Heart left ventricle (tissue), 16 donors: ENCODE measurements at regions of chr2 and their contacts with region 1.

Region 1: GRCh38 chr2:70767699-70768589 is at the start of gene ADD2:
- DNase-seq: peak in 4 of 5 donors; percentile 29 to 45 (median 37)
- ATAC-seq: peak; percentile 67 to 87 (median 78)
- H3K4me3 ChIP-seq: peak within 1 kb of the TSS; percentile 4 to 65 (median 56)
- H3K27ac ChIP-seq: peak within 1 kb of the TSS in 3 of 12 donors; percentile 3 to 44 (median 17)
- H3K4me1 ChIP-seq: peaks cover 6 to 20% (median 14%) of the 10 kb centered on the region in 12 donors
- H3K27me3 ChIP-seq: peaks cover 5 to 63% (median 32%) of the 10 kb centered on the region in 9 donors
- CTCF ChIP-seq: peak in 9 of 12 donors; percentile 13 to 52 (median 42)
- POLR2A ChIP-seq: no peak
- total RNA-seq, gene ADD2: 0.49 to 7.3 (median 3.7) TPM

Region 2: GRCh38 chr2:70647873-70648481 is 120.0 kb before region 1 on chr2:
- intact Hi-C with region 1: loop called in 1 of 10 experiments (anchors 5 kb)
- DNase-seq: peak in 3 of 5 donors; percentile 31 to 48 (median 47)
- ATAC-seq: peak in 3 of 4 donors; percentile 61 to 67 (median 62)
- H3K4me3 ChIP-seq: no peak overlapping the region
- H3K27ac ChIP-seq: no peak overlapping the region
- H3K4me1 ChIP-seq: no peaks in the 10 kb centered on the region
- H3K27me3 ChIP-seq: peaks cover 0 to 28% (median 0%) of the 10 kb centered on the region in 9 donors
- CTCF ChIP-seq: peak; percentile 75 to 99 (median 88)
- POLR2A ChIP-seq: no peak

Region 3: DNA sequence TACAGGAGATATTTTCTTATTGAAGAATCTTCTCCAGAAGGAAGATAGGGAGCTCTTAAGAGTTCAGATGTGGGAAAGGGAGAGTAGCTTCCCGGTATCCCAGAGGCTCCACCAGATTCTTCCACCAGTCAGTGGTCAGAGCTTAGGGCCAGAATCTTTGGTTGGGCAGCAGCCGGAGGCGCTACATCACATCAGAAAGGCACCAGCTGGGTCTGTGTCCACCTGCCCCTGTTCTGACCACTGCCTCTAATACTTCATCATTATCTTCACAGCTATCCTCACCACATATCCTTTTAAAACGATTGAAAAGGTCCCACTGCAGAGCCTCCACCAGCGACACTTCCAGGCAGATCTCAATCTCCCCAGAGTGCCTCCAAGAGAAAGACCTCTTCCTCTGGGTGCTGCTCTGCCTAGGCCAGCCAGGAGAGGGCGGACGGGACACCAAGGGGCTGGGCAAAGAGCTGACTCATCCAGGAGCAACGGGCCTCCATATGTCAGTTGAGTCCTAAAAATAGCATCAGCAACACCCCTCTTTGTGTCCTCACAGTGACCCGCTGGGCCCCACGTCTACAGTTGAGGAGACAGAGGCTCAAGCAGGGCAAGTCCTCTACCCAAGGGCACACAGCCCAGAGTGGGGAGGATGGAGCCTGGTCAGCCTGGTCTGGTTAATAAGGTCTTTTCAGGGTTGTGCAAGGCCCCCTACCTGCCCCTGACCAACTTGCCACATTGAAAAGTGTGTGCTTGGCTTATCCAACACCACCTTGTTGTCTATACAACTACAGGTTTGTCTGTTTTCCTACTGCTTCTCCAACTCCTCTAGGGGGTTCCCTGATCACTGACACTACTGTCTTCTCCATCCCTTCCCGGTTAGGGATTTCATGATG is 81.1 kb before region 1 on chr2:
- intact Hi-C with region 1: loop called in 1 of 10 experiments (anchors 5 kb)
- DNase-seq: peak in 4 of 5 donors; percentile 25 to 79 (median 43)
- ATAC-seq: peak; percentile 32 to 97 (median 92)
- H3K4me3 ChIP-seq: no peak overlapping the region
- H3K27ac ChIP-seq: no peak overlapping the region
- H3K4me1 ChIP-seq: peaks cover 0 to 4% (median 0%) of the 10 kb centered on the region in 12 donors
- H3K27me3 ChIP-seq: no peaks in the 10 kb centered on the region
- CTCF ChIP-seq: peak in 6 of 12 donors; percentile 12 to 44 (median 32)
- POLR2A ChIP-seq: no peak

Region 4: DNA sequence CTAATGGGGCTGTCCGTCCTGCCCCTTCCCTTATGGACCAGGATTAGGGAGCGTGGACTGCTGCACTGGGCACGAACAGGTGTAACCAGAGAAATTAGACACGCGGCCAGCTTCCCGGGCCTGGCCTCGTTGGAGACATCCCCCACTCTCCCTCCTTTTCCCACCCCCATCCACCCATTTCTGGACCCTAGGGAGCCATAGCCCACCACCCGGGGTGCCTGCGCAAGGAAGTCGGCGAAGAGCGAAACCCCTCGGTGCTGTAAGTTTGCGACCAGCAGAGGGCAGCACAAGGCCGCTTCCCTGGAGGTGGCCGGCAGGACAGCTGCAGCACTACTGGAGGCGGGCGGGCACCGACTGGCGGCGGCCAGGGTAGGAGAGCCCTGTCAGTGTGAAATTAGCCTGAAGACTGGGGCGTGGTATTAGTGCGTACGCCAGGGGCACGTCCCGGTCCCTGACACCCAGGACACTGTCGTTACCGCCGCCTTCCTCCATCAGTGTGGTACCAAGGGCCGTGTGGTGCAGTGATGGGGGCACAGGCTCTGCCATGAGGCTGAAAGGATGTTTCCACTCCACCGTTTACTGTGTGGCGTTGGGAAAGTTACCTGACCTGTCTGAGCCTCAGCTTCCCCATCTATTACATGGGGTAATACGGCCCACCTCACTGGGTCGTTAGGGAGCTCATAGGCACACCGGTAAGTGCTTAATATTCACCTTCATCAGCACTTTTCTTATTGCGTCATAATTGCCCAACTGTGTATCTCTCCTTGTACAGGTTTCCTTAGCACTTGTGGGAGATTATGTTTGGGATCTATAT is 103.7 kb after region 1 on chr2:
- intact Hi-C with region 1: no loop called
- DNase-seq: peak; percentile 83 to 92 (median 87)
- ATAC-seq: peak; percentile 89 to 97 (median 96)
- H3K4me3 ChIP-seq: peak overlapping the region in 3 of 12 donors; percentile 2 to 25 (median 15)
- H3K27ac ChIP-seq: no peak overlapping the region
- H3K4me1 ChIP-seq: peaks cover 0 to 13% (median 0%) of the 10 kb centered on the region in 12 donors
- H3K27me3 ChIP-seq: peaks cover 0 to 68% (median 44%) of the 10 kb centered on the region in 9 donors
- CTCF ChIP-seq: peak; percentile 87 to 93 (median 91)
- POLR2A ChIP-seq: no peak